Heart left ventricle (tissue), 16 donors: ENCODE measurements at regions of chr12 and their contacts with region 1.

Region 1: GRCh38 chr12:12611512-12612306 is at the start of gene CREBL2:
- DNase-seq: peak; percentile 93 to 97 (median 94)
- ATAC-seq: peak; percentile 97
- H3K4me3 ChIP-seq: peak within 1 kb of the TSS; percentile 70 to 90 (median 79)
- H3K27ac ChIP-seq: peak within 1 kb of the TSS; percentile 86 to 98 (median 94)
- H3K4me1 ChIP-seq: peaks cover 0 to 65% (median 22%) of the 10 kb centered on the region in 12 donors
- H3K27me3 ChIP-seq: no peaks in the 10 kb centered on the region
- CTCF ChIP-seq: peak in 2 of 12 donors; percentile 18 to 21
- POLR2A ChIP-seq: peak in 1 of 2 donors; percentile 44
- total RNA-seq, gene CREBL2: 15.5 to 30.0 (median 19.9) TPM

Region 2: DNA sequence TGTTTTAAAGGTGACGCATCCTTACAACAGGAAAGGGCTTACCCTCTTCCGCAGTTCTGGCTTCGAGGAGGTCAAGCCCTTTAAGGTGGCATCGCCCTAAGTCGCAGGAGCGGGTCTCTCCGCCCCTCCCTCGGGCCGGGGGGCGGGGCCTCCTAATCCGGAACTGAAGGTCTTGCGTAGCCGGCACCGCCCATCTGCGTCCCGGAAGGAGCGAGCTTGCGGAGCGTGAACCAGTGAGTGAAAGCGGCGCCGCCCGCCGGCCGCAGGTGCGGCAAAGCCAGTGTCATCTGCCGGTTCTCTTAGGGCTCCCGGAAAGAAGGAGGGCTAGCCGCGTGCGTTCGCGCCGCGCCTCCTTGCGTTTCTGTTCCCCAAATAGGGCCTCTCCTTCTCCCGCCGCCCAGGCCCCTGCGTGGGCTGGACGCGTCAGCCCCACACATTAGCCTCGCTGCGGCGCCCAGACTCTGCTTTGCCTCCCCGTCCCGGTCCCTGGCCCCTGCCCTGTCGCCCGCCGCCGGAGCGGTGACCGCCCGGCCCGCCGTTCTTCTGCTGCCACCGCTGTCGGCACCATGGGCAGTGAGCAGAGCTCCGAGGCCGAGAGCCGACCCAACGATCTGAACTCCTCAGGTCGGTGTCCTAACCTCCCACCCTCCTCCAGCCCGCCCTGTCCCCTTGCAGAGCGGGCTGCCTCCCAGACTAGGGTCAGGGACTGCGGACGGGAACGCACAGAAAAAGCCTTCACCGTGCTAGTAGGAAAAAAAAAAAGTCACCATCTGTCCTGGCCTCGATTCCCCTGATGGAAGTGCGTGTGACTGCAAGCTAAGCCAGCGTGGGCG is 254.6 kb before region 1 on chr12 and contains the start of gene BORCS5:
- intact Hi-C with region 1: loop called in 1 of 10 experiments (anchors 5 kb)
- DNase-seq: peak; percentile 96 to 98 (median 98)
- ATAC-seq: peak; percentile 95 to 99 (median 98)
- H3K4me3 ChIP-seq: peak within 1 kb of the TSS; percentile 61 to 98 (median 86)
- H3K27ac ChIP-seq: peak within 1 kb of the TSS; percentile 87 to 99 (median 96)
- H3K4me1 ChIP-seq: peaks cover 0 to 33% (median 12%) of the 10 kb centered on the region in 12 donors
- H3K27me3 ChIP-seq: no peaks in the 10 kb centered on the region
- CTCF ChIP-seq: peak in 7 of 12 donors; percentile 16 to 45 (median 31)
- POLR2A ChIP-seq: peak; percentile 81 to 98
- total RNA-seq, gene BORCS5: 7.6 to 21.3 (median 12.3) TPM

Region 3: GRCh38 chr12:12533238-12533829 is 78.4 kb before region 1 on chr12:
- intact Hi-C with region 1: no loop called
- DNase-seq: peak; percentile 48 to 67 (median 63)
- ATAC-seq: peak; percentile 49 to 79 (median 75)
- H3K4me3 ChIP-seq: no peak overlapping the region
- H3K27ac ChIP-seq: peak overlapping the region in 11 of 12 donors; percentile 54 to 75 (median 71)
- H3K4me1 ChIP-seq: peaks cover 4 to 56% (median 39%) of the 10 kb centered on the region in 12 donors
- H3K27me3 ChIP-seq: no peaks in the 10 kb centered on the region
- CTCF ChIP-seq: no peak
- POLR2A ChIP-seq: no peak

Region 4: DNA sequence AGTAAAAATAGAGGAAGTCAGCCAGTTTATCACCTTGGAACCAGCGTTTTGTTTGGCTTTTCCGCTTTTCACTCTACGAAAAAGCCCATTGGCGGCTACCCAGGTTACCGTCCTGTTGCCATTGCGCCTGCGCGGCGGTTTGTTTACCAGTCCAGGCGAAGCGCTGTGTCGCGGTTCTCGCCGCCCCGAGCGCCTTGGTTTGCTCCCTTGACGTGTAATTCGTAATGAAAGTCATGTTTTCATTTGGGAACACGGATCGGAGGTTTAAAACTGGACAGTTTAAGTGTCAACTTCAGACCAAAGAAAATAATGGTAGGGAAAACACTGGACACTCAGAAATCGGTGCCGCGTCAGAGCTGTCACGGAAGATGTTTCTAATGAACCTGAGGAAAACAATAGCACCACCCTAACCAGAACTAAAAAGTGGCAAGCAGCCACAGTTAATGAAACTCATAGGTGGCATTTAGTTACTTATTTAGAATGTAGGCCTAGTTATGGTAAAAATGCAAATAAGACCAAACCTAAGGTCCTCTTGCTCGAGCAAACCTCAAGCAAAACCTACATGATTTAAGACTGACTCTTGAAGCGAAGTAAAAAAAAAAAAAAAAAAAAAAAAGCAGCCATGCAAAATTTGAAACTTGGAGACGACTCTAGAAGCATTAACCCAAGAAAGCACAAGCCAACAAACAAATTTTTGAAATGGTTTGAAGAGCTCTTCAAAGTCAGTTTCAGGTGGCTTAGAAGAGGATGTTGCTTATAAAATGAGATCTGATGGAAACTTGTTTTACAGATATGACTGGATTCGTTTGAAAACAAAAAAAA is 85.1 kb after region 1 on chr12:
- intact Hi-C with region 1: loop called in 1 of 10 experiments (anchors 5 kb)
- DNase-seq: peak; percentile 91 to 95 (median 93)
- ATAC-seq: peak; percentile 87 to 95 (median 92)
- H3K4me3 ChIP-seq: peak overlapping the region; percentile 15 to 73 (median 64)
- H3K27ac ChIP-seq: peak overlapping the region; percentile 90 to 99 (median 96)
- H3K4me1 ChIP-seq: peaks cover 0 to 23% (median 5%) of the 10 kb centered on the region in 12 donors
- H3K27me3 ChIP-seq: no peaks in the 10 kb centered on the region
- CTCF ChIP-seq: peak in 1 of 12 donors; percentile 16
- POLR2A ChIP-seq: peak in 1 of 2 donors; percentile 73

Region 5: GRCh38 chr12:12716793-12717585 is 105.3 kb after region 1 on chr12 and contains the start of gene CDKN1B:
- intact Hi-C with region 1: loop called in 1 of 10 experiments (anchors 5 kb)
- DNase-seq: peak; percentile 92 to 96 (median 94)
- ATAC-seq: peak; percentile 86 to 96 (median 94)
- H3K4me3 ChIP-seq: peak within 1 kb of the TSS; percentile 77 to 96 (median 92)
- H3K27ac ChIP-seq: peak within 1 kb of the TSS; percentile 96 to 100 (median 100)
- H3K4me1 ChIP-seq: peaks cover 0 to 62% (median 56%) of the 10 kb centered on the region in 12 donors
- H3K27me3 ChIP-seq: no peaks in the 10 kb centered on the region
- CTCF ChIP-seq: no peak
- POLR2A ChIP-seq: peak; percentile 65 to 80
- total RNA-seq, gene CDKN1B: 25.8 to 44.9 (median 35.1) TPM

Region 6: DNA sequence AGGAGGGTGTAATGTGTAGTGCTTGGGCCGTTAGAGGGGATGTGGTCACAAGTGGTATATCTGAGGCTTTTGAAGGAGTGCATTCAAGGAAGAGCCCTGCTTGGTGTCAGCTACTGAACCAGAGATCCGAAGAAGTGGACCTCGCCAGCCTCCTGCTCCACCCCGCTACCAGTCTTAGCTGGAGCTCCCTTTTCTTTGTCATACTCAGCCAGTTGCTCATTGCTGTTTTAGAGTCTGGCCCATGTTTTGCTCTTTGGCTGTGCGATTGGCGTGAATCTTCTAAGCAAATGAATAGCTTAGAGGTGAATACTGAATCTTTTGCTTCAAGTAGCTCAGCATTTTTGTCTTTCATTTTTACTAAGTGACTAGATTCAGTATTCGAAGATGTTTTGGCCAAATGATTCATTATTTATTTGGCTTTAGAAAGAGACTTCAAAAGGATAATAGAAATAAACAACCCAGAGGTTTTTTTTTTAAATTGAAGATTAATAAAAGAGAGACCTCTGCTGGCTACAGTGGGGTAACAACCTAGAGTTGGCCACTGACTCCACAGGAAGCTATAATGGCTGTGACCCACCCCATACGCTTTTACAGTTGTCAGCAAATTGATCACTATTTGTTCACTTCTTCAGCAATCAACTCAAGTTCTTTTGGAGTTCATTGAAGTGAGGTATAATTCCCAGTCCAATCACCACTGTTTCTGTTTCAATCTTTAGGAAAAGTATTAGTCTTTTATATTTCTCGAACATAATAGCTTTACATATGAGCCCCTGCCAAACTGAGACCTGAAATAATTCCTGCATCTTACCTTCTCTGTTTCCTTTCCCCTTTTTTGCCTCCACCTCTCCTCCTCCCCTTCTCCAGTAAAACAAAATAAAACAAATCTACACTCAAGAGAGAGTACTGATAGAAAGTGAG is 125.3 kb after region 1 on chr12:
- intact Hi-C with region 1: no loop called
- DNase-seq: peak in 2 of 5 donors; percentile 23 to 26
- ATAC-seq: peak; percentile 45 to 83 (median 76)
- H3K4me3 ChIP-seq: peak overlapping the region in 3 of 12 donors; percentile 1 to 15 (median 3)
- H3K27ac ChIP-seq: peak overlapping the region in 8 of 12 donors; percentile 0 to 79 (median 22)
- H3K4me1 ChIP-seq: peaks cover 0 to 44% (median 16%) of the 10 kb centered on the region in 12 donors
- H3K27me3 ChIP-seq: no peaks in the 10 kb centered on the region
- CTCF ChIP-seq: peak; percentile 55 to 82 (median 68)
- POLR2A ChIP-seq: no peak